ENCODE measurements at regions of chrX and their contacts with region 1.

Region 1: GRCh38 chrX:39730662-39731397 is 366.9 kb downstream of the BCOR start:
- DNase-seq: peak; percentile 25
- H3K4me3 Mint-ChIP-seq: no peak overlapping the region
- H3K27ac Mint-ChIP-seq: peak overlapping the region; percentile 77
- H3K4me1 Mint-ChIP-seq: peaks cover 13% of the 10 kb centered on the region
- H3K27me3 Mint-ChIP-seq: no peaks in the 10 kb centered on the region

Region 2: GRCh38 chrX:39652336-39653131 is 78.3 kb before region 1 on chrX:
- intact Hi-C with region 1: loop called (anchors 10 kb)
- DNase-seq: no peak
- H3K4me3 Mint-ChIP-seq: no peak overlapping the region
- H3K27ac Mint-ChIP-seq: no peak overlapping the region
- H3K4me1 Mint-ChIP-seq: peaks cover 4% of the 10 kb centered on the region
- H3K27me3 Mint-ChIP-seq: peaks cover 3% of the 10 kb centered on the region

Region 3: GRCh38 chrX:40058719-40059118 is 327.9 kb after region 1 on chrX:
- intact Hi-C with region 1: loop called (anchors 10 kb)
- DNase-seq: no peak
- H3K4me3 Mint-ChIP-seq: no peak overlapping the region
- H3K27ac Mint-ChIP-seq: no peak overlapping the region
- H3K4me1 Mint-ChIP-seq: peaks cover 11% of the 10 kb centered on the region
- H3K27me3 Mint-ChIP-seq: no peaks in the 10 kb centered on the region

Region 4: GRCh38 chrX:40169193-40170101 is 438.6 kb after region 1 on chrX:
- intact Hi-C with region 1: loop called (anchors 10 kb)
- DNase-seq: peak; percentile 80
- H3K4me3 Mint-ChIP-seq: peak overlapping the region; percentile 81
- H3K27ac Mint-ChIP-seq: peak overlapping the region; percentile 94
- H3K4me1 Mint-ChIP-seq: peaks cover 37% of the 10 kb centered on the region
- H3K27me3 Mint-ChIP-seq: no peaks in the 10 kb centered on the region

Region 5: DNA sequence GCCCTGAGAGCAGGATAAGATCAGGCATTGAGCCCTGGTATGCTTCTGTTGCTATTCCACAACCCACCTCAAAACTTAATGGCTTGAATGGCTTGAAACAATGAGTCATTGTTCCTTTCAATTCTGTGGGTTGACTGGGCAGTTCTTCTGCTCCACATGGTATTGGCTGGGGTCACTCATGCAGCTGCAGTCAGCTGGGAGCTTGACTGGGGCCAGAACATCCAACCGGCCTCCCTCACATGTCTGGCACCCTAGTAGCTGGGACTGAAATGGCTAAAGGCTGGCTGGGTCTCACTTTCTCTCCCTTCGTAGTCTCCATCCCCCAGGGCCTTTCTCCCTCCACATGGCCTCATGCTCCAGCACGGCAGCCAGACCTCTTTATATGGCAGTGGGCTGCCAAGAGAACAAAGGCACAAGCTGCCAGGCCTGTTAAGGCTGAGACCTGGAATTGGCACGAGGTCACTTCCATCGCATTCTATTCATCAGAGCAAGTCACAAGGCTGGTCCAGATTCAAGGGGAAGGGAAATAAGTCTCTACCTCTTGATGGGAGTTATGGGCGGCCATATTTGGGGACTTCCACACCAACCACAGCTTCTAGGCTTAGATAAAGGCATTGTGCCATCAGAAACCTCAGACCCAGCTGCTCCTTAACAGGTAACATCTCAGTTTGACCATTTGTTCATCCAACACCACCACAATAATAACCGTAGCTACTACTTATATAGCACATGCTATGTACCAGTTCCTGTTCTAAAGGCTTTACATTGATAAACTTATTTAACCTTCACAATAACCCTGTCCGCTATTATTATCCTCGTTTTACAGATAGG is 690.3 kb after region 1 on chrX:
- intact Hi-C with region 1: loop called (anchors 5 kb)
- DNase-seq: no peak
- H3K4me3 Mint-ChIP-seq: no peak overlapping the region
- H3K27ac Mint-ChIP-seq: peak overlapping the region; percentile 42
- H3K4me1 Mint-ChIP-seq: peaks cover 23% of the 10 kb centered on the region
- H3K27me3 Mint-ChIP-seq: no peaks in the 10 kb centered on the region